CD8-positive, alpha-beta memory T cell (primary cell): ENCODE measurements at regions of chr11 and their contacts with region 1.

Region 1: DNA sequence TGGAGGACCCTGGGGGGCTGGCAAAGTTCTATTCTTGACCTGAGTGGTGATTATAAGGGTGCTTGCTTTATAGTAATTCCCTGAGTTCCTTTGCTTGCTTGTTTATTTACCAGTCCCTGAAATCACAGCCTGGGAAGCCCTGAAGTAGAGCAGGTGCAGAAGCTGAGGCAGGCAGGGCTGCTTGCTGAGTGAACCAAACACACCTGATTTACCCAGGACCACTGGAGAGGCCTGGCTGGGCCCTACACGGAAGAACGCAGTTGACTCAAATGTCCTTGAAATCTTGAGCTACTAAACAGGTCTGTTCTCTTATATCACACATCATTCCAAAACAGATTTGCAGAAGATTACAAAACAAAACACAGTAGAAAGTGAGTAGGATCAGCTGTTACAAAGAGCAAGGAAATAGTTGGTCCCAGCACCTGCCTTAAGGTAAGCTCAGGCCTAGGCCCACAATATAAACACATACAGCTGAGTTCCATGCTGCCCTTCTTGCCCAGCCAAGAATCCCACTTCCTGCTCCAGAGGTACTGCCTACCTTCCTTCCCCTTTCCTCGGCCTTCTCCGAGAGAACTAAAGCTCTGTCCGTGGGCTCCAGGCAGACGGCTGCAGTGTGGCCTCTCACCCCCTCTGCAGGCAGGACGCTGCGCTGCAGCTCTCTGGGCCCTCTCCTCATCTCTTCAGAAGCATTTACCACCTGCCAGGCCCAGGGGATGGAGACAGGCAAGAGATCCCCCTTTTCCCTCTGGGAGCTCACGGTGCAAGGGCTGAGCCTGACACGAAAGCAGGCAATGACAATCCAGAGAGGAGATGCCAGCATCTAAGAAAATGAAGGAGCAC is 46.1 kb upstream of the SCUBE2 start:
- DNase-seq: peak; percentile 28 to 62 (median 43)
- H3K4me3 ChIP-seq: no peak overlapping the region
- H3K4me3 Mint-ChIP-seq: peak overlapping the region in 6 of 7 donors; percentile 1 to 62 (median 28)
- H3K27ac ChIP-seq: no peak overlapping the region
- H3K27ac Mint-ChIP-seq: peak overlapping the region in 6 of 8 donors; percentile 7 to 77 (median 50)
- H3K4me1 ChIP-seq: no peaks in the 10 kb centered on the region
- H3K4me1 Mint-ChIP-seq: peaks cover 13 to 17% (median 14%) of the 10 kb centered on the region in 3 donors
- H3K27me3 ChIP-seq: no peaks in the 10 kb centered on the region
- H3K27me3 Mint-ChIP-seq: peaks cover 0 to 3% of the 10 kb centered on the region in 2 donors

Region 2: DNA sequence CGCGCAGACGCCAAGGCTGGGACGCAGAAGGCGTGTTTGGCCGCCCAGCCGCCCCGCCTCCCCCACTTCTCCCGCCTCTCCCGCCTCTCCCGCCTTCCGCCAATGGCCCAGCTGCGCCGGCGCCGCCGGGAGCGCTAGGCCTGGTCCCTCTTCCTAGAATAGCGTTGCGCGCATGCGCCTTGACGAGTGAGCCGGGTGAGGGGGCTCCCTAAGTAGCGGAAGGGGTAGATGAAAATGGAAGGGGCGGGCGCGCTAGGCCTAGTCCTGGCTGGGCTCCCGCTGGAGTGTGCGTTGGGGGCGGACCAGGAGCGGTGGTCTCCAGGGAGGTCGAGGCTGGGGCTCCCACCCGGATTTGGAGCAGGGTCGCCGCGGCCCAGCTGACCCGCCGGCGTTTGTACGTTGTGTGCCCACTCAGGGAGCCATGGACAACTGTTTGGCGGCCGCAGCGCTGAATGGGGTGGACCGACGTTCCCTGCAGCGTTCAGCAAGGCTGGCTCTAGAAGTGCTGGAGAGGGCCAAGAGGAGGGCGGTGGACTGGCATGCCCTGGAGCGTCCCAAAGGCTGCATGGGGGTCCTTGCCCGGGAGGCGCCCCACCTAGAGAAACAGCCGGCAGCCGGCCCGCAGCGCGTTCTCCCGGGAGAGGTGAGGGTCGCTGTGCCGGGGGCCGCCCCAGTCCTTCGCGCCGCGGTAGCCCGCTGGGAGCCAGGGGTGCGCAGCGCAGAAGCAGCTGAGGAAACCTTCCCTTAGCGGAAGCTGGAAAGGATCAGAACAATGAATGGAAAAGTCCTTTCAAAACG is 226.3 kb before region 1 on chr11 and contains the start of gene AKIP1:
- CTCF ChIA-PET with region 1: interaction called, 19 read pairs
- POLR2A ChIA-PET with region 1: no interaction called
- DNase-seq: peak; percentile 72 to 91 (median 80)
- H3K4me3 ChIP-seq: peak within 1 kb of the TSS; percentile 69
- H3K4me3 Mint-ChIP-seq: peak within 1 kb of the TSS; percentile 90 to 98 (median 93)
- H3K27ac ChIP-seq: peak within 1 kb of the TSS; percentile 55
- H3K27ac Mint-ChIP-seq: peak within 1 kb of the TSS; percentile 50 to 95 (median 89)
- H3K4me1 ChIP-seq: peaks cover 23% of the 10 kb centered on the region
- H3K4me1 Mint-ChIP-seq: peaks cover 30 to 47% (median 38%) of the 10 kb centered on the region in 3 donors
- H3K27me3 ChIP-seq: no peaks in the 10 kb centered on the region
- H3K27me3 Mint-ChIP-seq: no peaks in the 10 kb centered on the region
- total RNA-seq, gene AKIP1: 24.0 to 26.9 TPM

Region 3: DNA sequence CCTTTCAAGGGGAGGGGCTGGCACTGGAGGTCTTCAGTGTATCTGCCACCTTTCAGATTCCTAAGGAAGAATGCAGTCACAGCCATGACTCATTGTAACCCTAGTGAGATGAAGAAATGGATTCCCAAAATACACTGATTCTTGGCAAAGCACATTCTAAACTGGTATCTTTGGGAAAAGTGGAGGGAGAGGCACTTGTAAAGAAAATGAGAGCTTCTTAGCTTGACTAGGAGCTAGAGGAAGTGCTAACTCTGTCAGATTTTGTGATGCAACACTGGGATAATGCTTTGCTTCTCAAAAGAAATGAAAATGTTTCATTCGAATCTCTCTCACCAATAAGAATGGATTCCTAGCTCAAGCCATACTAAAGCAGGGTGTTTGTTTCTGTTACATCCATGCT is 148.1 kb before region 1 on chr11:
- CTCF ChIA-PET with region 1: no interaction called
- POLR2A ChIA-PET with region 1: no interaction called
- DNase-seq: no peak
- H3K4me3 ChIP-seq: no peak overlapping the region
- H3K4me3 Mint-ChIP-seq: no peak overlapping the region
- H3K27ac ChIP-seq: no peak overlapping the region
- H3K27ac Mint-ChIP-seq: no peak overlapping the region
- H3K4me1 ChIP-seq: no peaks in the 10 kb centered on the region
- H3K4me1 Mint-ChIP-seq: no peaks in the 10 kb centered on the region
- H3K27me3 ChIP-seq: no peaks in the 10 kb centered on the region
- H3K27me3 Mint-ChIP-seq: peaks cover 7 to 19% of the 10 kb centered on the region in 2 donors

Region 4: DNA sequence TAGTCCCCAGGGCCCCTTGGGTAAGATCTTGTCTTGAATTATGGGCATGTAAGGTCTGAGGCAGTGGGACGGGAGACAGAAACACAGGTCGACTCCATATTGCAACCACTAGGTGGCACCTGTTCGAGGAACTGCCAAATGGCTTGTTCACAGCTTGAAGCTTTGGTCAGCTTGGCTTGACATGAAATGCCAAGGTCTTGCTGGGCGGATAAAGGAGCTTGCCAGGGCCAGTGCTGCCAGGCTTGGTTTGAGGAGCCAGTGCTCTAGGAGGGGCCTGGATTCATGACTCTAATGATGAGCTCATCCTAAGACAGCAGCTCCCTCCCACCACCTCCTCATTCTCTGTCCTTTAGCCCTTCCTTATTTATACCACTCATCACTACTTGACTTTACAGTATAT is 121.8 kb before region 1 on chr11:
- CTCF ChIA-PET with region 1: interaction called, 51 read pairs
- POLR2A ChIA-PET with region 1: no interaction called
- DNase-seq: peak; percentile 8 to 68 (median 41)
- H3K4me3 ChIP-seq: no peak overlapping the region
- H3K4me3 Mint-ChIP-seq: no peak overlapping the region
- H3K27ac ChIP-seq: no peak overlapping the region
- H3K27ac Mint-ChIP-seq: no peak overlapping the region
- H3K4me1 ChIP-seq: peaks cover 6% of the 10 kb centered on the region
- H3K4me1 Mint-ChIP-seq: peaks cover 8 to 25% (median 11%) of the 10 kb centered on the region in 3 donors
- H3K27me3 ChIP-seq: no peaks in the 10 kb centered on the region
- H3K27me3 Mint-ChIP-seq: peaks cover 5 to 10% of the 10 kb centered on the region in 2 donors

Region 5: DNA sequence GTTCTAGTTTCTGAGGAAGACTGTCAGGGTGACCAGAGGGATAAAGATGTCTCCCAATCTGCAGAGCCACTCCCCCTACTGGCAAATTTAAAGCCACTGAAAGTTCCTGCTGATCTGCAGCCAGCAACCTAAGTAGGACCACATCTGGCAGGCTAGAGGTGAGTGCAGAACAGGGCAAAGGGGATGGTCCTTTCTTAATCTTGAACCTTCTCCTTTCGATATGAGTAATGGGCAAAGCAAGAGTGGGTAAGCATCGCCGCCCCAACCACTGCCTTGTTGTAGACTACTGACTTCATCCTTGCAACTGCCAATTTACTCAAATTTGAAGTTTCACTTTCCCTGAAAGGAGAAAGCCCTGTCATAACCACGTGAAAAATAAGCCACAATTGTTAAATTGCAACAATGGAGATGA is 76.8 kb before region 1 on chr11:
- CTCF ChIA-PET with region 1: no interaction called
- POLR2A ChIA-PET with region 1: no interaction called
- DNase-seq: no peak
- H3K4me3 ChIP-seq: no peak overlapping the region
- H3K4me3 Mint-ChIP-seq: no peak overlapping the region
- H3K27ac ChIP-seq: no peak overlapping the region
- H3K27ac Mint-ChIP-seq: no peak overlapping the region
- H3K4me1 ChIP-seq: no peaks in the 10 kb centered on the region
- H3K4me1 Mint-ChIP-seq: peaks cover 0 to 4% (median 4%) of the 10 kb centered on the region in 3 donors
- H3K27me3 ChIP-seq: no peaks in the 10 kb centered on the region
- H3K27me3 Mint-ChIP-seq: peaks cover 0 to 2% of the 10 kb centered on the region in 2 donors

Region 6: DNA sequence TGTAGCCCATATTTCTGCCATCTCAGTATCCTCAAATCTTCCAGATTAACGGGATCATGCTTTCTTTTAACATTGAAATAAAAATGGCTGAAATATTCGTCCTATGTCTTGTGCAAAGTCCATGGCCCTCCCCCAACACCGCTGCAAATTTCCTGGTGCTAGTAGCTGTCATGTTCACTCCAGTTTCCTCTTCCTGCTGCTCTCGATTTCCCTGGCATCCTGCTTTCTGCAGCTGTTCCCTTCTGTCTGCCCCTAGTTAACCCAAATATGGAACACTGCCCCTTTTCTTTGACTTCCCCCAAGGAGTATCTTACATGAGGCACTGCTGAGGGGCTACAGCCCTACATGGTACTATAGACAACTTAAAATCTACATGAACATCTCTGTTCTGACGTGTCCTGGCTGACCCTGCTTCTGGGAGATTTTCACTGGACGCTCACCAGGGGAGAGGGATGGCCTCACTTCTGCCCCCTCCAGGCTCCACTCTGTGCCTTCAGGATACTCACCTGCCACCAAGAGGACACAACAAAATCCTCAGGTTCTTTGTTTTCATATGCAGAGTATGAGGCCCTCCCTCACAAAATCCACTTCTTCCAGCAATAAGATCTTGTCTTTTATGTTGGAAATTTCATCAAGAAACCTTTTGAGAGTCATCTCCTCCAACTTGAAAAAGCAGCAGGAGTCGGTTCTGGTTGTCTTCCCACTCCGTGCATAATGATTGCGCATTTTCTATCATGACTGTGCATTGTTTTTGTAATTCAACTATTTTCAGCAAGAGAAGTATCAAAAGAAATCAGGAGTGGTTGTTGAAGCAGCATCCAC is 16.6 kb before region 1 on chr11:
- CTCF ChIA-PET with region 1: interaction called, 10 read pairs
- POLR2A ChIA-PET with region 1: no interaction called
- DNase-seq: no peak
- H3K4me3 ChIP-seq: no peak overlapping the region
- H3K4me3 Mint-ChIP-seq: no peak overlapping the region
- H3K27ac ChIP-seq: no peak overlapping the region
- H3K27ac Mint-ChIP-seq: peak overlapping the region in 1 of 8 donors; percentile 43
- H3K4me1 ChIP-seq: no peaks in the 10 kb centered on the region
- H3K4me1 Mint-ChIP-seq: no peaks in the 10 kb centered on the region
- H3K27me3 ChIP-seq: no peaks in the 10 kb centered on the region
- H3K27me3 Mint-ChIP-seq: peaks cover 11% of the 10 kb centered on the region in 2 donors